ENCODE measurements at regions of chr3 and their contacts with region 1.

Region 1: DNA sequence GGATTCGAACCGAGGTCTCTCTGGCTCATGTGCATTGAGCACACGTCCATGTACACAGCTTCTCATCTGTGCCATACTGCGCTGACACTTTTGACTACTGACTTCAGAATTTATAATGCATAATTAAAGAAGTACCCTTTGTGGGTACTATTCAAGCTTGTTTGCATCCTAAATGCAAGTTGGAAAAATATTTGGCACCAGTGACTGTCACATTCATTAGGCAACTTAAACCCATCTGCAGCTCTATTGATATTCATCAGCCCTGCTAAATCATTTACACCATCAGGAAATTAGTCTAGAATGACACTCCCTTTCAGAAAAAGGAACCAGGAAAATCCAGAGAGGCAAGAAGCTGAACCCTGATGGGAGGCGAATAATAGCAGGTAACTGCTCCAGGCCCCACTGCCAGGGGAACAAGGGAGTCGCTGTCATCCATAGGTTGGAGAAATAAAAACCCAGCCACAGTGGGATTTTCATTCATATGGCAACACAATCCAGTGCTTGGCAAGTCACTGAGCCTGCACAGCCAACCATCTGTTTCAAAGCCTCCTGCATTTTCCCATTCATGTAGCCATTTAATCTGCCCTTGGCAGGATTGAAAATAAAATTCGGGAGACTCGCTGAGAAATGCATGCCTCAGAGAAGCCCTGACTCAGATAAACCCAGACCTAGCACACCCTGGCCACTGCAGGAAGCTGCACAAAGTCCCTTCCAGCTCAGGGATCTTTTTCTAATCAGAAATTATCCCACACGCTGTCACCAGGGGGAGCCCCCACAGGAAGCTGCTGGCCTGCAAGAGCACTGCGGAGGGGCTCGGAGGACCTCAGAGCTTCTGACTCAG is 103.0 kb upstream of the VEPH1 start:
- DNase-seq: peak; percentile 30
- CTCF ChIP-seq: peak; percentile 82

Region 2: DNA sequence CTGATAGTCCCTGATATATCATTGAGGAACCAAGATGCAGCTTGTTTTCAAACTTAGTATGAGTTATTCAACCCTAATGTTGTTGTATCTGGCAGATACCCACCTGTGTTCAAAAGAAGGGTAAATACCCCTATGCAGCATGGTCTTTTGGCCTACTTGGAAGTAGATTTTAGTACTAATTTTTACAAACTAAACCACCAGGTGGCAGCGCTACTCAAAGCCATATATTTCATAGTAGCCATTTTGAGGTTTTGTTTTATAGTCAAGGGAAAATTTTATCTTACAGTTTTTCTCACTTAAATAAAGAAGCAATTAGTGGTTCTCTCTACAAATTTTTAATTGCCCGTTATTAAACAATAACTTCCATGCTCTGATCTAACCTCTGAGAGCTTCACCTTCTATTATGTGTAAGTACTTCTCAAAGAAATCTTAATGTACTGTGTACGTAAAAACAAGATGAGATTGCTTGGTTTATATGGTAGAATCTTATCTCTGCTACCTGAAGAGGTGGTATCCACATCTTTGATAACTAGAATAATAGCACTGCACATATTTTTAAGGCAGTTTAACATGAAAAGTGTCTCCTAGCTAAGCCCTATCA is 933.3 kb after region 1 on chr3:
- in situ Hi-C with region 1: loop called (anchors 25 kb)
- DNase-seq: no peak
- CTCF ChIP-seq: peak; percentile 46

Measured in GM13977 (cell line).